AG04449 (cell line): ENCODE measurements at regions of chr17 and their contacts with region 1.

Region 1: GRCh38 chr17:50397111-50397918 is at the start of gene LRRC59:
- DNase-seq: no peak
- H3K4me3 ChIP-seq: peak within 1 kb of the TSS; percentile 94
- CTCF ChIP-seq: peak; percentile 100

Region 2: GRCh38 chr17:50361561-50362480 is 35.5 kb before region 1 on chr17:
- CTCF ChIA-PET with region 1: interaction called, 21 read pairs
- POLR2A ChIA-PET with region 1: no interaction called
- DNase-seq: no peak
- H3K4me3 ChIP-seq: no peak overlapping the region
- CTCF ChIP-seq: peak; percentile 80

Region 3: DNA sequence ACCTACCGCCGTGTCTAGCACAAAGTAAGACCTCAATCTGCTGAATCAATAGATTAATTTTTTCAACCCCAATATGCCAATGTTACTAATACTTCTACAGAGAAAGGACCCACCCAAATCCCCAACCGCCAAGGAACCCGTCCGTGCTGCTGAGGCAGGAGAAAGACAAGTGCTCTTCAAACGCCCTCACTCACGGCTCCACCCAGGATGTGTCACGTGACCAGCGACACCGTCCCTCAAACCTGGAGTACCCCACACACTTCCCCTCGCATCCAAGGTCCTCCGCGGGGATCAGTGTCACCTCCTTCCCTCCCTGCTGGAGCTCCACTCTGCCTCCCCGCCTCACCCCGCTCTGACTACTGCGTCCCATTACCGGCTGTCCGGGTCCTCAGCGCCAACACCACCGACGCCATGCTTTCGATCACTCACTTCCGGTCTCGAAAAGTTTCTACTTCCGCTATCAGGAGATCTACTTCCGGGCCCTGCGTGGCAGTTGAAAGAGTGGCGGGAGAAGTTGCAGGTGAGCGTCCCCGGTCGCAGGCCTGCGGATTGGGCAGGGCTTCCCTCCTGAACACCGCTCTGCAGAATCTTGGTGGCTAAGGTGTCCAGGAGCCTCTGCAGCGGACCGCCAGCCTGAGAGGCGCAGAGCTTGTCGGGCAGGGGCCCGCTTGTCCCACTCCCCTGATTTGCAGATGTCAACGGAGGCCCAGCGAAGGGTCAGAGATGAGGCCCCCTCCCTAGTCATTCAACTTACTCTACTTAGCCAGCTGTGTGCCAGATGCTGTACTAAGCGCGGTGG is 24.4 kb before region 1 on chr17 and contains the starts of genes EME1 and MRPL27:
- CTCF ChIA-PET with region 1: interaction called, 52 read pairs
- POLR2A ChIA-PET with region 1: no interaction called
- DNase-seq: no peak
- H3K4me3 ChIP-seq: peak within 1 kb of the TSS; percentile 100
- CTCF ChIP-seq: no peak

Region 4: DNA sequence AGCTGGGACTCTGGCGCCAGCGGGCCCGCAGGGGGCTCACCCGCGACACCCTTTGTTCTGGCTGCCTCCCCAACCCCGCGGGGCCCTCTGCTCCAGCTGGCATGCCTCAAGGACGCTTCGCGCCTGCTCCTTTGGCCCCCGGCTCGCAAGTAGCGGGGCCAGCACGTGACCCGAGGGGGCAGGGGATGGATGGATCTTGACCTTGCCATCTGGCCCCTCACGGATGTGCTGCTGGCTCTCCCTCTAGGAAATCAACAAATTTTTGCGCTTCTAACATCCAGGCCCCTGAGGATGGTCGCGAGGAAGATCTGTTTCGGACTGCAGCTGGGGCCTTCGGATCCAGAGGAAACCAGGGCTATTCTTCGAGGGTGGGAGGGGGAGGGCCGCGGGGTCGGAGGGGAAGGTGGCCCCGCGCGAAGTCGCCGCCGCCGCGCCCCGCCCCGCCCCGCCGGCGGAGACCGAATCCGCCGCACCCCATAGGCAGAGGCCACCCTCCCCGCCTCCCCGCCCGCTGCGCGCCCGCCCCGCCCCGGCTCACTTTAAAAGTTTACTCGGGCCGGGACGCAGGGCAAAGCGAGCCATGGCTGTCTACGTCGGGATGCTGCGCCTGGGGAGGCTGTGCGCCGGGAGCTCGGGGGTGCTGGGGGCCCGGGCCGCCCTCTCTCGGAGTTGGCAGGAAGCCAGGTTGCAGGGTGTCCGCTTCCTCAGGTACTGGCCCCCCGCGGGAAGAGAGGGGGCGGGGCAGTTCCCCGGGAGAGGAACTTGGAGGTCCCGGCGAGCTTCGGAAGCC is 28.6 kb after region 1 on chr17 and contains the start of gene ACSF2:
- CTCF ChIA-PET with region 1: interaction called, 51 read pairs
- POLR2A ChIA-PET with region 1: interaction called, 3 read pairs
- DNase-seq: no peak
- H3K4me3 ChIP-seq: peak within 1 kb of the TSS; percentile 71
- CTCF ChIP-seq: no peak

Region 5: DNA sequence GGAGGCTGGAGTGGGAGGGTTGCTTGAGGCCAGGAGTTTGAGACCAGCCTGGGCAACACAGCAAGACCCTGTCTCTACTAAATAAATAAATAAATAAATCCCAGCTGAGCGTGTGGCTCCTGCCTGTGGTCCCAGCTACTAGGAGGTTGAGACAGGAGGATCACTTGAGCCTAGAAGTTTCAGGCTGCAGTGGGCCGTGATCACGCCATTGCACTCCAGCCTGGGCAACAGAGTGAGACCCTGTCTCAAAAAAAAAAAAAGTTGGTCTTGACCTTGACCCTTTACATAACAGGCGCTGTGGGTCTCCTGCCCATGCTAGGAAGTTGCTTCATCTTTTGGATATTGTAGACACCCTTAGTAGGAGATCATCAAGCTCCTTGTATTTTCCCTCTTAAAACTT is 40.1 kb after region 1 on chr17:
- CTCF ChIA-PET with region 1: interaction called, 14 read pairs
- POLR2A ChIA-PET with region 1: no interaction called
- DNase-seq: no peak
- H3K4me3 ChIP-seq: no peak overlapping the region
- CTCF ChIP-seq: no peak